Activated CD8-positive, alpha-beta T cell treated with anti-CD3 and anti-CD28 coated beads for 36 hours (primary cell): ENCODE measurements at regions of chr2 and their contacts with region 1.

Region 1: GRCh38 chr2:237072067-237072931 is 13.4 kb upstream of the COPS8 start:
- DNase-seq: peak; percentile 82
- ATAC-seq: peak; percentile 55
- H3K4me3 Mint-ChIP-seq: no peak overlapping the region
- H3K27ac Mint-ChIP-seq: no peak overlapping the region
- H3K4me1 Mint-ChIP-seq: no peaks in the 10 kb centered on the region
- H3K27me3 Mint-ChIP-seq: no peaks in the 10 kb centered on the region
- CTCF ChIP-seq: peak; percentile 97

Region 2: GRCh38 chr2:236352761-236353593 is 719.3 kb before region 1 on chr2:
- CTCF ChIA-PET with region 1: interaction called, 3 read pairs
- POLR2A ChIA-PET with region 1: no interaction called
- intact Hi-C with region 1: loop called (anchors 5 kb)
- DNase-seq: peak; percentile 56
- ATAC-seq: peak; percentile 34
- H3K4me3 Mint-ChIP-seq: no peak overlapping the region
- H3K27ac Mint-ChIP-seq: no peak overlapping the region
- H3K4me1 Mint-ChIP-seq: peaks cover 4% of the 10 kb centered on the region
- H3K27me3 Mint-ChIP-seq: peaks cover 3% of the 10 kb centered on the region
- CTCF ChIP-seq: peak; percentile 85

Region 3: GRCh38 chr2:237045432-237045831 is 26.9 kb before region 1 on chr2:
- CTCF ChIA-PET with region 1: no interaction called
- POLR2A ChIA-PET with region 1: no interaction called
- intact Hi-C with region 1: no loop called
- DNase-seq: no peak
- ATAC-seq: no peak
- H3K4me3 Mint-ChIP-seq: no peak overlapping the region
- H3K27ac Mint-ChIP-seq: no peak overlapping the region
- H3K4me1 Mint-ChIP-seq: no peaks in the 10 kb centered on the region
- H3K27me3 Mint-ChIP-seq: peaks cover 2% of the 10 kb centered on the region
- CTCF ChIP-seq: no peak

Region 4: GRCh38 chr2:237181844-237182243 is 109.5 kb after region 1 on chr2:
- CTCF ChIA-PET with region 1: no interaction called
- POLR2A ChIA-PET with region 1: no interaction called
- intact Hi-C with region 1: no loop called
- DNase-seq: no peak
- ATAC-seq: no peak
- H3K4me3 Mint-ChIP-seq: no peak overlapping the region
- H3K27ac Mint-ChIP-seq: no peak overlapping the region
- H3K4me1 Mint-ChIP-seq: no peaks in the 10 kb centered on the region
- H3K27me3 Mint-ChIP-seq: peaks cover 22% of the 10 kb centered on the region
- CTCF ChIP-seq: no peak

Region 5: DNA sequence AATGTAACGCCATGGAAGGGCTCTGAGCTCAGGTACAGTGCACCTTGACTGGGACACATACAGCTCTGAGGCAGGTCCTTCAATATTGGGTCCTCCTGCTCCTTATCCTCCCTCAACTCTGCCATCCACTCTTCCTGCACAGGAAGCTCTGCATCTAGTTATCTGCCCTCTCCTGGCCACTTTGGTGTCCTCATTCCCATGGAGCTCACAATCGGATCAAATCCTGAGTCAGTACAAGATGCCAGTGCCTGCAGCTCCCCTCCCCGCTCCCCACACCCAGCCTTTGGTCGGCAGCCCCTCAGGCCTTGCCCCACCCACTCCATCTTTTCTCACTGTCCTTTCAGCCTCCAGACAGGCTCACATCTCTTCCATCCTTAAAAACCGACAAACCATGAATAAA is 613.1 kb after region 1 on chr2:
- CTCF ChIA-PET with region 1: no interaction called
- POLR2A ChIA-PET with region 1: no interaction called
- intact Hi-C with region 1: no loop called
- DNase-seq: no peak
- ATAC-seq: no peak
- H3K4me3 Mint-ChIP-seq: no peak overlapping the region
- H3K27ac Mint-ChIP-seq: no peak overlapping the region
- H3K4me1 Mint-ChIP-seq: peaks cover 36% of the 10 kb centered on the region
- H3K27me3 Mint-ChIP-seq: no peaks in the 10 kb centered on the region
- CTCF ChIP-seq: no peak

Region 6: GRCh38 chr2:238653431-238654109 is 1581.3 kb after region 1 on chr2:
- CTCF ChIA-PET with region 1: no interaction called
- POLR2A ChIA-PET with region 1: no interaction called
- intact Hi-C with region 1: no loop called
- DNase-seq: no peak
- ATAC-seq: no peak
- H3K4me3 Mint-ChIP-seq: no peak overlapping the region
- H3K27ac Mint-ChIP-seq: no peak overlapping the region
- H3K4me1 Mint-ChIP-seq: no peaks in the 10 kb centered on the region
- H3K27me3 Mint-ChIP-seq: peaks cover 2% of the 10 kb centered on the region
- CTCF ChIP-seq: no peak